Transverse colon (tissue), 4 donors: ENCODE measurements at regions of chr1 and their contacts with region 1.

Region 1: DNA sequence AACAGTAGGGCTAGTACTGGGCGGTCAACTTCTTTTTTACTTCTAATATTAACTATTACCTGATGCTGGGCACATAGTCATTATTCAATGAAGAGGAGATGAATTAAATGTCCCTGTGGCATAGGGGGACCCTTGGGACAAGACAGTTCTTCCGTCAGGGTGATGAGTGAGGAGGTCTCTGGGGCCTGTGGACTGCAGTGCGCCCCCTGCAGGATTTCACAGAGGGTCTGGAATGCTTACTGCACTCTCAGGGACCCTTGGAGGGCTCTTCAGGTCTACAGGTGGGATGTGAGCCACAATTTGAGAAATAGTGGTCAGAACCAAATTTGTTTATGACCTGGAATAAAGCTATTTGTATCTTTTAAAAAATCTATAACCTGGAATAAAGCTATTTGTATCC is 149.4 kb downstream of the FAM78B start:
- DNase-seq: no peak
- H3K4me3 ChIP-seq: no peak overlapping the region
- H3K27ac ChIP-seq: no peak overlapping the region
- H3K4me1 ChIP-seq: no peaks in the 10 kb centered on the region
- H3K27me3 ChIP-seq: no peaks in the 10 kb centered on the region
- CTCF ChIP-seq: no peak
- EP300 ChIP-seq: no peak
- POLR2A ChIP-seq: no peak

Region 2: DNA sequence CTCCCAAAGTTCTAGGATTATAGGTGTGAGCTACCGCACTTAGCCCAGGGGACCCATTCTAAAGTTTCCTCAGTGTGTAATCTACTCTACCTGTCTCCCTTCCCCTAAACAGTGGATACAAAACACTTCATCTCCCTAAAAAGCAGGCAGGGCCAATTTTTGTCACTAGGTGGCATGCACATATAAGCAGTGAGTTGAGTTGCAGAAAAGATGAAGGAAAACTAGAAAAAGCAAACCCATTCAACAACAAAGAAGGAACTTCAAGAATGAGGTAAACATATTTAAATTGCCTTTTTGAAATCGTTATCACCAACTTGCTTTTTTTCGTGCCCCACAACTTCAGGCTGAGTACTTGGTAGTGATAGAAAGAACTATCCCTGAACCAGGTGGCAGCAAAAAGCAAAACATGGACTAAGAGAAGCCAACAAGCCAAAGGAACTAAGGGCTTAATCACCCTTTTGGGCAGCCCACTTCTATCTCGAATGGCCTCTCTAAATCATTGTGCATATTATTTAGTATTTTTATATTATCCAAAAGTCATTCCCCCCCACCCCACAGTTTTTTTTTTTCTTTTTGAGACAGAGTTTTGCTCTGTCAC is 299.4 kb before region 1 on chr1:
- in situ Hi-C with region 1: no loop called
- intact Hi-C with region 1: no loop called
- DNase-seq: peak; percentile 60
- H3K4me3 ChIP-seq: no peak overlapping the region
- H3K27ac ChIP-seq: no peak overlapping the region
- H3K4me1 ChIP-seq: no peaks in the 10 kb centered on the region
- H3K27me3 ChIP-seq: no peaks in the 10 kb centered on the region
- CTCF ChIP-seq: peak; percentile 51 to 76 (median 65)
- EP300 ChIP-seq: no peak
- POLR2A ChIP-seq: no peak

Region 3: DNA sequence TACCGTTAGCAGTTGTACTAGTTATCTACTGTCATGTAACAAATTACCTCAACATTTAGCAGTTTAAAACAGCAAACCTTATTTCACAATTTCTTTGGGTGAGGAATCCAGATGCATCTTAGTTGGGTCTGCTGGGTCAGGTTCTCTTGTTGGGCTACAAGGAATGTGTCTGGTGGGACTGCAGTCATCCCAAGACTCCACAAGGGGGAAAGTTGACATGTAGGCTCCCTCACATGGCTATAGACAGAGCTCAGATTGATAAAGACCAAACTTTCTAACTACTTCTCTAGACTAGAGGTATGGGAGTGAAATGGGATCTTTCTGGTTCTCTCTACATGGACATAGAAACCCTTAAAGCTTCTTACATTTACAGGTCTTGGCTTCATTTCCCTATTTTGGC is 29.1 kb before region 1 on chr1:
- in situ Hi-C with region 1: no loop called
- intact Hi-C with region 1: loop called (anchors 1 kb)
- DNase-seq: no peak
- H3K4me3 ChIP-seq: no peak overlapping the region
- H3K27ac ChIP-seq: no peak overlapping the region
- H3K4me1 ChIP-seq: no peaks in the 10 kb centered on the region
- H3K27me3 ChIP-seq: no peaks in the 10 kb centered on the region
- CTCF ChIP-seq: no peak
- EP300 ChIP-seq: no peak
- POLR2A ChIP-seq: no peak

Region 4: GRCh38 chr1:166073489-166073888 is 56.1 kb after region 1 on chr1:
- in situ Hi-C with region 1: loop called in 1 of 4 experiments (anchors 10 kb)
- intact Hi-C with region 1: no loop called
- DNase-seq: no peak
- H3K4me3 ChIP-seq: no peak overlapping the region
- H3K27ac ChIP-seq: no peak overlapping the region
- H3K4me1 ChIP-seq: no peaks in the 10 kb centered on the region
- H3K27me3 ChIP-seq: no peaks in the 10 kb centered on the region
- CTCF ChIP-seq: no peak
- EP300 ChIP-seq: no peak
- POLR2A ChIP-seq: no peak

Region 5: DNA sequence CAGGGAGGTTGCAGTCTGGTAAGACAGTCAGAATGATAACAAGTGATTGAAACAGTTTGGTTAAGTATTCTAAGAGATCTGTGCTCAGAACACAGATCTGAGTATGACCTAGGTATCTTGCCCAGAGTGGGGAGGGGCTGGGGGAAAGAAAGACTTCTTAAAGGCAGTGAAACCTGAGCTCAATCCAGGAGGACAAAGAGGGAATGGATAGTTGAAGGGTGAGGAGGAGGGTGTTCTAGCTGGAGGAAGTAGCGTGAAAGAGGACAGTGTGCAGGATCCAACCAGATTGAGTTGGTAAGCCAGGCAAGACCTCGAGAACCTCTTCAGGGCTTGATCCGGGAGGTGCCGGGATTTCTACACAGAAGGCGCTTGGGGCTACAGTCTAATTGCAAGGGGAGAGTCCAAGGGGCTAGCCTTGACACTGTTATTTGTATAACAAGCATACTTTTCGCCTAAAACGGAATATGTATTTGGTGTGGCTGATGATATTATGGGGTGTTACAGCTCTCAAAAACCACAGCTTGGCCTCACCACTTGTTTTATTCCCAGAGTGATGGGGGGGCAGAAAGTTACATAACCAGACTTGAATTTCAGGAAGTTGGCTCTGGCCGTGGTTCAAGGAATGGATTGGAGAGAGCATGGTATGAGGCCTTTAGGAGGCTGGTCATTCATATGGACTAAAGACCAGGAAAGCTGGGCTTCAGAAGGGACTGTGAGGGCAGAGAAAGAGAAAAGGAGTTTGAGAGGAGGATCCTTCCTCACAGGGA is 1631.8 kb after region 1 on chr1:
- in situ Hi-C with region 1: no loop called
- intact Hi-C with region 1: loop called (anchors 10 kb)
- DNase-seq: no peak
- H3K4me3 ChIP-seq: no peak overlapping the region
- H3K27ac ChIP-seq: peak overlapping the region; percentile 7 to 52 (median 38)
- H3K4me1 ChIP-seq: peaks cover 4 to 47% (median 11%) of the 10 kb centered on the region in 4 donors
- H3K27me3 ChIP-seq: no peaks in the 10 kb centered on the region
- CTCF ChIP-seq: no peak
- EP300 ChIP-seq: no peak
- POLR2A ChIP-seq: no peak